ENCODE measurements at regions of chr7 and their contacts with region 1.

Region 1: DNA sequence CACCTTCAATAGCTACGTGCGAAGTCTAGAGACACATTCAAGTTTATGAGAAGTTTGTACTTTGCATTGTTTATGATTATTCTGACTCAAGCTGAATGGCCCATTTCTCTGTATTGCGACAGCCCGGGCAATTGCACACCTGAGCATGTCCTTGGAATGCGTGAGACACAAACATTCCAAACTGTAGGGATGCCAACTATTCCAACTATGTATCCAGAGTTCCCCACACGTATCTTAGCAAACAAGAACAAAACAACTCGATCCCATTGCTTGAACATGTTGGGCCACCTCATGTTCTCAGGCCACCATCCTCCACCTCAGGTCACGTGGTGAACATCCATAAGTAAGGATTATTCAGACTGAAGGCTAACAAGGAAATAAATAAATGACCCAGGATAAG is 51.4 kb upstream of the EGFR start:
- DNase-seq: peak; percentile 81 to 87
- H3K4me3 ChIP-seq: no peak overlapping the region
- H3K4me3 Mint-ChIP-seq: peak overlapping the region; percentile 54
- H3K27ac Mint-ChIP-seq: peak overlapping the region; percentile 94
- H3K4me1 ChIP-seq: peaks cover 25% of the 10 kb centered on the region
- H3K4me1 Mint-ChIP-seq: peaks cover 23% of the 10 kb centered on the region
- H3K27me3 ChIP-seq: no peaks in the 10 kb centered on the region
- H3K27me3 Mint-ChIP-seq: no peaks in the 10 kb centered on the region
- CTCF ChIP-seq: no peak

Region 2: DNA sequence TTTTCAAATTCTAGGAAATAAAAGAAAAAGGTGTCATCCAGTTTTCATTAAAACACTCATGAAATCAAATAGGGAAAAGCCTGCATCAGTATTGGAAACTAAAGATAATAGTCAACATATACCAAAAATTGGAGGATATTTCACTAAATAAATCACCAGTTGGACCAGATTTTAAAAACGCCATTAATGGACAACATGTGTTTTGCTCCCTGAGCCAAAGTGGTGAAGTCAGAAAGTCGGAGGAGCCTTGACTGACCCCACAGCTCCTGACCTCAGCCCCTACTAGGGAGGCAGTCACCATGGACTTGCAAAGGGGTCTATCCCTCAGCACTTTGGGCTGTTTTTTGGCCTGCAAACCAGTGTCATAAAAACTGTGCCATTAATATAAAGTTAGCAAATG is 110.1 kb before region 1 on chr7:
- CTCF ChIA-PET with region 1: no interaction called
- POLR2A ChIA-PET with region 1: no interaction called
- intact Hi-C with region 1: no loop called
- DNase-seq: no peak
- H3K4me3 ChIP-seq: no peak overlapping the region
- H3K4me3 Mint-ChIP-seq: no peak overlapping the region
- H3K27ac Mint-ChIP-seq: no peak overlapping the region
- H3K4me1 ChIP-seq: no peaks in the 10 kb centered on the region
- H3K4me1 Mint-ChIP-seq: no peaks in the 10 kb centered on the region
- H3K27me3 ChIP-seq: no peaks in the 10 kb centered on the region
- H3K27me3 Mint-ChIP-seq: peaks cover 16% of the 10 kb centered on the region
- CTCF ChIP-seq: no peak

Region 3: DNA sequence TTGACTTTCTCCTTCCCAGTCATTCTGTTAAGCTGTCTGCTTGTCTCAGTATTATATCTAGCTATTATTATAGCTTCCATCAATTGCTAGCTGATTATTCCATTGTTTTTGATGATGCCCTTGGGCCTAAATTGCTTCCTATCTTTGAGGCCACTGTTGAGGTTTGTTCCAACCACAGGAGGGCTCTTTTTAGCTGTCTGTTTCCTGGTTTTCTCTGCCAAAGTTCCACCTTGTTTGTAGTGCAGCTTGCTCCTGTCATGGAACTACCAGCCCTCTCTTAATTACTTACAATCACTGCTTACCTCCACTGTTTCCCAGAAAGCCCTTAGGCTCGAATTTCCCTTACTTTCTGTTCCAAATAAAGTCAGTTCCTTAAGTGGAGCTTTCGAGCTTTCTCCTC is 89.7 kb before region 1 on chr7:
- CTCF ChIA-PET with region 1: no interaction called
- POLR2A ChIA-PET with region 1: no interaction called
- intact Hi-C with region 1: loop called (anchors 1 kb)
- DNase-seq: peak in 1 of 2 experiments; percentile 36
- H3K4me3 ChIP-seq: no peak overlapping the region
- H3K4me3 Mint-ChIP-seq: no peak overlapping the region
- H3K27ac Mint-ChIP-seq: peak overlapping the region; percentile 8
- H3K4me1 ChIP-seq: peaks cover 44% of the 10 kb centered on the region
- H3K4me1 Mint-ChIP-seq: peaks cover 30% of the 10 kb centered on the region
- H3K27me3 ChIP-seq: no peaks in the 10 kb centered on the region
- H3K27me3 Mint-ChIP-seq: no peaks in the 10 kb centered on the region
- CTCF ChIP-seq: peak in 1 of 2 experiments; percentile 37

Region 4: GRCh38 chr7:54933643-54934042 is 33.7 kb before region 1 on chr7:
- CTCF ChIA-PET with region 1: no interaction called
- POLR2A ChIA-PET with region 1: no interaction called
- intact Hi-C with region 1: no loop called
- DNase-seq: no peak
- H3K4me3 ChIP-seq: peak overlapping the region; percentile 48
- H3K4me3 Mint-ChIP-seq: peak overlapping the region; percentile 78
- H3K27ac Mint-ChIP-seq: no peak overlapping the region
- H3K4me1 ChIP-seq: peaks cover 11% of the 10 kb centered on the region
- H3K4me1 Mint-ChIP-seq: peaks cover 6% of the 10 kb centered on the region
- H3K27me3 ChIP-seq: no peaks in the 10 kb centered on the region
- H3K27me3 Mint-ChIP-seq: no peaks in the 10 kb centered on the region
- CTCF ChIP-seq: no peak

Region 5: GRCh38 chr7:54946749-54947148 is 20.6 kb before region 1 on chr7:
- CTCF ChIA-PET with region 1: interaction called, 3 read pairs
- POLR2A ChIA-PET with region 1: interaction called, 3 read pairs
- intact Hi-C with region 1: loop called (anchors 1 kb)
- DNase-seq: no peak
- H3K4me3 ChIP-seq: no peak overlapping the region
- H3K4me3 Mint-ChIP-seq: no peak overlapping the region
- H3K27ac Mint-ChIP-seq: peak overlapping the region; percentile 14
- H3K4me1 ChIP-seq: peaks cover 11% of the 10 kb centered on the region
- H3K4me1 Mint-ChIP-seq: peaks cover 6% of the 10 kb centered on the region
- H3K27me3 ChIP-seq: no peaks in the 10 kb centered on the region
- H3K27me3 Mint-ChIP-seq: no peaks in the 10 kb centered on the region
- CTCF ChIP-seq: no peak

Region 6: GRCh38 chr7:54985405-54986330 is 18.3 kb after region 1 on chr7:
- CTCF ChIA-PET with region 1: no interaction called
- POLR2A ChIA-PET with region 1: no interaction called
- intact Hi-C with region 1: loop called (anchors 1 kb)
- DNase-seq: peak; percentile 36 to 53
- H3K4me3 ChIP-seq: no peak overlapping the region
- H3K4me3 Mint-ChIP-seq: peak overlapping the region; percentile 28
- H3K27ac Mint-ChIP-seq: peak overlapping the region; percentile 65
- H3K4me1 ChIP-seq: peaks cover 26% of the 10 kb centered on the region
- H3K4me1 Mint-ChIP-seq: peaks cover 21% of the 10 kb centered on the region
- H3K27me3 ChIP-seq: no peaks in the 10 kb centered on the region
- H3K27me3 Mint-ChIP-seq: no peaks in the 10 kb centered on the region
- CTCF ChIP-seq: no peak

Region 7: GRCh38 chr7:55018361-55019190 is 51.2 kb after region 1 on chr7 and contains the start of gene EGFR:
- CTCF ChIA-PET with region 1: no interaction called
- POLR2A ChIA-PET with region 1: interaction called, 3 read pairs
- intact Hi-C with region 1: loop called (anchors 2 kb)
- DNase-seq: peak; percentile 79 to 83
- H3K4me3 ChIP-seq: peak within 1 kb of the TSS; percentile 86
- H3K4me3 Mint-ChIP-seq: peak within 1 kb of the TSS; percentile 81
- H3K27ac Mint-ChIP-seq: peak within 1 kb of the TSS; percentile 59
- H3K4me1 ChIP-seq: peaks cover 32% of the 10 kb centered on the region
- H3K4me1 Mint-ChIP-seq: peaks cover 16% of the 10 kb centered on the region
- H3K27me3 ChIP-seq: no peaks in the 10 kb centered on the region
- H3K27me3 Mint-ChIP-seq: no peaks in the 10 kb centered on the region
- CTCF ChIP-seq: no peak
- total RNA-seq, gene EGFR: 55.1 and 60.1 TPM in 2 replicates

Region 8: GRCh38 chr7:55033241-55033846 is 66.0 kb after region 1 on chr7:
- CTCF ChIA-PET with region 1: no interaction called
- POLR2A ChIA-PET with region 1: no interaction called
- intact Hi-C with region 1: no loop called
- DNase-seq: no peak
- H3K4me3 ChIP-seq: no peak overlapping the region
- H3K4me3 Mint-ChIP-seq: no peak overlapping the region
- H3K27ac Mint-ChIP-seq: no peak overlapping the region
- H3K4me1 ChIP-seq: 0 out of 2 replicates have a peak, but pooled peaks cover 9% of the 10 kb centered on the region
- H3K4me1 Mint-ChIP-seq: no peaks in the 10 kb centered on the region
- H3K27me3 ChIP-seq: no peaks in the 10 kb centered on the region
- H3K27me3 Mint-ChIP-seq: no peaks in the 10 kb centered on the region
- CTCF ChIP-seq: no peak

Region 9: GRCh38 chr7:55065079-55065478 is 97.7 kb after region 1 on chr7:
- CTCF ChIA-PET with region 1: no interaction called
- POLR2A ChIA-PET with region 1: no interaction called
- intact Hi-C with region 1: loop called (anchors 1 kb)
- DNase-seq: peak in 1 of 2 experiments; percentile 47
- H3K4me3 ChIP-seq: no peak overlapping the region
- H3K4me3 Mint-ChIP-seq: no peak overlapping the region
- H3K27ac Mint-ChIP-seq: peak overlapping the region; percentile 95
- H3K4me1 ChIP-seq: peaks cover 66% of the 10 kb centered on the region
- H3K4me1 Mint-ChIP-seq: peaks cover 46% of the 10 kb centered on the region
- H3K27me3 ChIP-seq: no peaks in the 10 kb centered on the region
- H3K27me3 Mint-ChIP-seq: no peaks in the 10 kb centered on the region
- CTCF ChIP-seq: no peak

Region 10: GRCh38 chr7:55171155-55171554 is 203.8 kb after region 1 on chr7:
- CTCF ChIA-PET with region 1: no interaction called
- POLR2A ChIA-PET with region 1: no interaction called
- intact Hi-C with region 1: no loop called
- DNase-seq: peak in 1 of 2 experiments; percentile 9
- H3K4me3 ChIP-seq: no peak overlapping the region
- H3K4me3 Mint-ChIP-seq: no peak overlapping the region
- H3K27ac Mint-ChIP-seq: no peak overlapping the region
- H3K4me1 ChIP-seq: no peaks in the 10 kb centered on the region
- H3K4me1 Mint-ChIP-seq: no peaks in the 10 kb centered on the region
- H3K27me3 ChIP-seq: no peaks in the 10 kb centered on the region
- H3K27me3 Mint-ChIP-seq: no peaks in the 10 kb centered on the region
- CTCF ChIP-seq: no peak

Region 11: DNA sequence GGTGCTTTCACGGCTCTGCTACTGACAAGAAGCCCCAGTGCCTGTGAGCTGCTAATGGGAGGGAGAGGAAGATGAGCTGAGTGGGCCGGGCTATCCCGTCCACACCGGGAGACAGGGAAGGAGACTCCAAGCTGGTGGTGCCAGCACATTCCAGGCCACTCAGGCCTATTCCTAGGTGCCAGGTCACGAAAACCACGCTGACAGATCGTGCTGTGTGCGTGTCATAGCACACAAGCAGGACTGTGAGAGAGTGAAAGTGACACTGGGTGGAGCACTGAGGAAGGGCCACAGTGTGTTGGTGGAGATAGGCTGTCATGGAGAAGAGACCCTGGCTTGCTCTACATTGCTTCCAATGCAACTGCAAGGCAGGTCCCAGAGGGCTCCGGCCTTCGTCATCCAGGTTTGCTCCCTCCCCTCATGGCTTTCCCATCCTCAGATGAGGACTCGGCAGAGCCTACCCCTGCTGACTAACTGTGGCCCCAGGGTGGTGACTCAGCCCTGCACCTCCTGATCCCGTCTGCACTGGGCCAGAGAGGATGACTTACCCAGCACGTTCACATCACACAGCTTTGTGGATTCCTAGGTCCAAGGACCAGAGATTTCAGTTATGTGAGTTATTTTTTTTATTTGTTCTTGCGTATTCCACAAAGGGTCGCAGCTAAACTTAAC is 218.7 kb after region 1 on chr7:
- CTCF ChIA-PET with region 1: no interaction called
- POLR2A ChIA-PET with region 1: no interaction called
- intact Hi-C with region 1: loop called (anchors 5 kb)
- DNase-seq: peak; percentile 42 to 76
- H3K4me3 ChIP-seq: no peak overlapping the region
- H3K4me3 Mint-ChIP-seq: peak overlapping the region; percentile 91
- H3K27ac Mint-ChIP-seq: peak overlapping the region; percentile 85
- H3K4me1 ChIP-seq: peaks cover 77% of the 10 kb centered on the region
- H3K4me1 Mint-ChIP-seq: peaks cover 65% of the 10 kb centered on the region
- H3K27me3 ChIP-seq: no peaks in the 10 kb centered on the region
- H3K27me3 Mint-ChIP-seq: no peaks in the 10 kb centered on the region
- CTCF ChIP-seq: no peak

Measured in Caco-2 (cell line).